ENCODE measurements at regions of chr17 and their contacts with region 1.

Region 1: GRCh38 chr17:67647482-67647881 is 70.3 kb upstream of the NOL11 start:
- DNase-seq: no peak
- H3K4me3 ChIP-seq: no peak overlapping the region
- H3K27ac ChIP-seq: no peak overlapping the region
- H3K4me1 ChIP-seq: no peaks in the 10 kb centered on the region
- H3K27me3 ChIP-seq: no peaks in the 10 kb centered on the region
- CTCF ChIP-seq: no peak

Region 2: GRCh38 chr17:66951935-66952662 is 695.4 kb before region 1 on chr17:
- CTCF ChIA-PET with region 1: no interaction called
- dilution Hi-C with region 1: no loop called
- in situ Hi-C with region 1: no loop called
- intact Hi-C with region 1: no loop called
- DNase-seq: peak; percentile 97
- H3K4me3 ChIP-seq: no peak overlapping the region
- H3K27ac ChIP-seq: peak overlapping the region; percentile 85
- H3K4me1 ChIP-seq: peaks cover 38% of the 10 kb centered on the region
- H3K27me3 ChIP-seq: no peaks in the 10 kb centered on the region
- CTCF ChIP-seq: no peak

Region 3: DNA sequence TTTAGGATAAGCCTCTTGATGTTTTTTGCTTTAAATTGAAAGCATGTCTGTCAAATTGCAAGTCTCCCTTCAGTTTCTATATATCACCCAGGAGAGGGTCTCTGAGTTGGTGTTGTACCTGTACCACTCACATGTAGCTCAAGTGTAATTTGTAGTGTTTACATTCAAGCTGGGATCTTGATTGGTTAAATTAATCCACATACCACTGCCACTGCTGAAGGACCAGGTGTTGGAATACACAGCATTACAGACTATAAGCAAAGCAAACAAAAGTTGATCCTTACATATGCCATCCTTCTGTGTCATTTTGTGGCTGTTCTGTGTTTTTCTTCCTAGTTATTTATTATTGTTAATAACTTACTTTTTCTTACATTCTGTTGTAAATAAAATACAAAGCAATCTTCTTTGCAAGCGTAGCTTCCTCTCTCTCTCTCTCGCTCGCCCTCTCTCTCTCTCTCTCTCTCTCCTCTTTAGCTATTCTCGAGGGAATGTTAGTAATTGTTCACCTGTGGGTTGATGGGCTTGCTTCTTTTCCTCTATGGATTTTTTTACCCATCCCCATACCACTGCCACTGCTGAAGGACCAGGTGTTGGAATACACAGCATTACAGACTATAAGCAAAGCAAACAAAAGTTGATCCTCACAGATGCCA is 49.5 kb after region 1 on chr17:
- CTCF ChIA-PET with region 1: no interaction called
- dilution Hi-C with region 1: loop called (anchors 5 kb)
- in situ Hi-C with region 1: no loop called
- intact Hi-C with region 1: no loop called
- DNase-seq: no peak
- H3K4me3 ChIP-seq: no peak overlapping the region
- H3K27ac ChIP-seq: no peak overlapping the region
- H3K4me1 ChIP-seq: no peaks in the 10 kb centered on the region
- H3K27me3 ChIP-seq: no peaks in the 10 kb centered on the region
- CTCF ChIP-seq: no peak

Measured in mammary epithelial cell (primary cell).